PC-3 (cell line): ENCODE measurements at regions of chr10 and their contacts with region 1.

Region 1: DNA sequence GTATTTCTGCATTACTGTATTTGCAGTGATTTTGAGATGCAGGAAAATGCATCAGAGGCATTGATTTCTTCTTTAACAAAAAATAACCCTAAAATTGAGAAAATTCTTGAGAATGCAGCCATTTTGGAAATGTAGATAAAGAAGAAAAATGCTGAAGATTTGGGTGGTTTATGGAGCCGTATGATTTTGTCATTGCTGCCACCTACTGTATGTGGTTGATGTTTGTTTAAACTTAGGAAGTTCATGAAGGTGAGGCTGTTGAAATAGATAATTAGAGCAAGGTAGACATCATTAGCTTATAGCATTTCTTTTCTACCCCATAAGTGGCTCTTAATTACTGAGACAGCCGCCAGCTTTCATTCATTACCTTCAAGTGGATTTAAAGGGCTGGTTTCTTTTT is 92.1 kb upstream of the SAMD8 start:
- DNase-seq: peak; percentile 88
- ATAC-seq: peak; percentile 20; the same call in 1 of the 2 replicates
- H3K4me3 ChIP-seq: no peak overlapping the region
- H3K27ac ChIP-seq: no peak overlapping the region
- H3K4me1 ChIP-seq: peaks cover 14% of the 10 kb centered on the region
- H3K27me3 ChIP-seq: no peaks in the 10 kb centered on the region
- CTCF ChIP-seq: peak; percentile 98

Region 2: GRCh38 chr10:74244097-74244685 is 775.2 kb before region 1 on chr10:
- CTCF ChIA-PET with region 1: interaction called, 4 read pairs
- POLR2A ChIA-PET with region 1: interaction called, 3 read pairs
- intact Hi-C with region 1: loop called (anchors 1 kb)
- DNase-seq: peak; percentile 99
- ATAC-seq: peak; percentile 20; the same call in 1 of the 2 replicates
- H3K4me3 ChIP-seq: no peak overlapping the region
- H3K27ac ChIP-seq: no peak overlapping the region
- H3K4me1 ChIP-seq: no peaks in the 10 kb centered on the region
- H3K27me3 ChIP-seq: no peaks in the 10 kb centered on the region
- CTCF ChIP-seq: peak; percentile 100

Region 3: GRCh38 chr10:74432841-74433594 is 586.4 kb before region 1 on chr10:
- CTCF ChIA-PET with region 1: no interaction called
- POLR2A ChIA-PET with region 1: interaction called, 3 read pairs
- intact Hi-C with region 1: loop called (anchors 5 kb)
- DNase-seq: peak; percentile 70
- ATAC-seq: peak; percentile 82
- H3K4me3 ChIP-seq: no peak overlapping the region
- H3K27ac ChIP-seq: peak overlapping the region; percentile 46
- H3K4me1 ChIP-seq: peaks cover 29% of the 10 kb centered on the region
- H3K27me3 ChIP-seq: no peaks in the 10 kb centered on the region
- CTCF ChIP-seq: no peak

Region 4: DNA sequence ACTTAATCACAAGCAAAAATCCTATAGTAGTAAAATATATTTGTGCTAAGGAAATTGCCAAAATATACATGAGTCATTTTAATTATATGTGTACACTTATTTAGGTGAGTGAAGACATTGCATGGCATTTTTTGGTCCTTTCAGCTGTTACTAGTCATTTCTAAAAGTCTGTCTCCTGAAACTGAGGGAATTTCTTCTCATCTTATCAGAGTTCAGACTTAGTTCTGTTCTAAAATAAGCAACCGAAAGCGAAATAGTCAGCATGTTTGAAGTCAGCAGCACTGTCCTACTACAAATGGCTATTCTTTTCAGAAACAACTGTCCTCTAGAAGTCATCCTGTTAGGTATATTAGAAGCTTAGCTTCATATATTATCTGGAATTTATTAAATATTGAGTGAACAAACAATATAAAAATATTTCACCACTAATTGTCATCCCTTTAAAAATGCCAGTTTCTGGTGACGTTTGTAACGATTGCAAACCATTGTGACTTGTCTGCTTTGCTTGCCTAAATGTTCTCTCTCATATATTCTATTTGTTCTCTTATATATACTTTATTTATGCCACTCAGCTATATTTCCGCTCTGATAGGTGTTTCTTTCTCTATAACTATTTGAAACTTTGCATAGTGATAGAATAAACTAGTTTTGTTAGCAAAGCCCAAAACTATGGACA is 420.3 kb before region 1 on chr10:
- CTCF ChIA-PET with region 1: interaction called, 5 read pairs
- POLR2A ChIA-PET with region 1: no interaction called
- intact Hi-C with region 1: loop called (anchors 5 kb)
- DNase-seq: peak; percentile 74
- ATAC-seq: peak; percentile 89
- H3K4me3 ChIP-seq: no peak overlapping the region
- H3K27ac ChIP-seq: no peak overlapping the region
- H3K4me1 ChIP-seq: peaks cover 12% of the 10 kb centered on the region
- H3K27me3 ChIP-seq: no peaks in the 10 kb centered on the region
- CTCF ChIP-seq: no peak

Region 5: DNA sequence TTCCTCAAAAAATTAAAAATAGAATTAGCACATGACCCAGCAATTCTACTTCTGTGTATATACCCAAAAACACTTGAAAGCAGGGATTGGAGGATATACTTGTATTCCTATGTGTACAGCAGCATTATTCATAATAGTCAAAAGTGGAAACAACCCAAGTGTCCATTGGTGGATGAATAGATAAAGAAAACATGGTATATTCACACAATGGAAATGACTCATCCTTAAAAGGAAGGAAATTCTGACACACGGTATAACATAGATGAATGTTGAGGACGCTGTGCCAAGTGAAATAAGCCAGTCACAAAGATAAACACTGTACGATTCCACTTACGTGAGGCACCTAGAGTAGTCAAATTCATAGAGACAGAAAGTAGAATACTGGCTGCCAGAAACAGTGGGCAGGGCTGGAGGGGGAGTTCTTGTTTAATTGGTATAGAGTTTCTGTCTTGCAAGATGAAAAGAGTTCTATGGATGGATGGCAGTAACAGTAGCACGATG is 219.6 kb before region 1 on chr10:
- CTCF ChIA-PET with region 1: no interaction called
- POLR2A ChIA-PET with region 1: no interaction called
- intact Hi-C with region 1: loop called (anchors 1 kb)
- DNase-seq: peak; percentile 100
- ATAC-seq: peak; percentile 97
- H3K4me3 ChIP-seq: peak overlapping the region; percentile 3; the same call in 1 of the 2 replicates
- H3K27ac ChIP-seq: peak overlapping the region; percentile 67
- H3K4me1 ChIP-seq: peaks cover 8% of the 10 kb centered on the region
- H3K27me3 ChIP-seq: no peaks in the 10 kb centered on the region
- CTCF ChIP-seq: no peak

Region 6: DNA sequence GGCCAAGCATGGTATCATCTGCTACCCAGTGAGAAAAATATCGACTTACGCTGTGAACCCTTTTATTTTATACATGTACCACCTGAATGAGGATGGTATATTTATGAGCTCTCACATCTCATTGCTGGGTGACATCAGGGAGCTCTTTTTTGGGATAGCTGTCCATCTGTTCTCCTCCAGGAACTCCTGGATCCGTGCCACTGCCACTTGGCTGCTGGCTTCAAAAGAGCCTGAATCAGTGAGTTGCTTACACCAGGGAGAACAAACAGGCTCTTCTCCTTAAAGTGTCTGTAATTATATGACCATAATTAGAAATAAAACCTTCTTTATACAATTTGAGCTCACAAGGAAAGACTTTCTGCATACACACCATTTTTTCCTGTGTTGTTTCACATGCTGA is 86.7 kb before region 1 on chr10:
- CTCF ChIA-PET with region 1: no interaction called
- POLR2A ChIA-PET with region 1: no interaction called
- intact Hi-C with region 1: no loop called
- DNase-seq: peak; percentile 47
- ATAC-seq: no peak
- H3K4me3 ChIP-seq: no peak overlapping the region
- H3K27ac ChIP-seq: no peak overlapping the region
- H3K4me1 ChIP-seq: peaks cover 22% of the 10 kb centered on the region
- H3K27me3 ChIP-seq: no peaks in the 10 kb centered on the region
- CTCF ChIP-seq: no peak

Region 7: DNA sequence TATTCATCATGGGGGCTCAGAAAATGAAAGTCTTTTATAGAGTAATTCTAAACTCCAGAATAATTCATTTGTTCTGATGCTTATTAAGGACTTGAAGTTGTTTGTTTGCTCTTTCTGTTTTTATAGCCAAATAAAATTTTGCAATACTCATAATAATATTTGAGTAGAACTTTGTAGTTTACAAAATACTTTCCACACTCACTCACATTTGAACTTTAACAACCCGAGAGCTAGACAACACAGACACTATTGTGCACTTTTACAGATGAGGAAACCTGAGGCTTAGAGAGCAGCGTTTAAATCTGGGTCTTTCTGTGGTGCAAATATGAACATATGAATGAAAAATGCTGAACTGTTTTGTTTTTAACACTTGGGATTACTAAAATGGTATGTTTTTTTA is 66.2 kb before region 1 on chr10:
- CTCF ChIA-PET with region 1: no interaction called
- POLR2A ChIA-PET with region 1: no interaction called
- intact Hi-C with region 1: loop called (anchors 2 kb)
- DNase-seq: peak; percentile 89
- ATAC-seq: peak; percentile 70
- H3K4me3 ChIP-seq: peak overlapping the region; percentile 0; the same call in 1 of the 2 replicates
- H3K27ac ChIP-seq: peak overlapping the region; percentile 1; the same call in 1 of the 2 replicates
- H3K4me1 ChIP-seq: peaks cover 45% of the 10 kb centered on the region
- H3K27me3 ChIP-seq: no peaks in the 10 kb centered on the region
- CTCF ChIP-seq: no peak

Region 8: DNA sequence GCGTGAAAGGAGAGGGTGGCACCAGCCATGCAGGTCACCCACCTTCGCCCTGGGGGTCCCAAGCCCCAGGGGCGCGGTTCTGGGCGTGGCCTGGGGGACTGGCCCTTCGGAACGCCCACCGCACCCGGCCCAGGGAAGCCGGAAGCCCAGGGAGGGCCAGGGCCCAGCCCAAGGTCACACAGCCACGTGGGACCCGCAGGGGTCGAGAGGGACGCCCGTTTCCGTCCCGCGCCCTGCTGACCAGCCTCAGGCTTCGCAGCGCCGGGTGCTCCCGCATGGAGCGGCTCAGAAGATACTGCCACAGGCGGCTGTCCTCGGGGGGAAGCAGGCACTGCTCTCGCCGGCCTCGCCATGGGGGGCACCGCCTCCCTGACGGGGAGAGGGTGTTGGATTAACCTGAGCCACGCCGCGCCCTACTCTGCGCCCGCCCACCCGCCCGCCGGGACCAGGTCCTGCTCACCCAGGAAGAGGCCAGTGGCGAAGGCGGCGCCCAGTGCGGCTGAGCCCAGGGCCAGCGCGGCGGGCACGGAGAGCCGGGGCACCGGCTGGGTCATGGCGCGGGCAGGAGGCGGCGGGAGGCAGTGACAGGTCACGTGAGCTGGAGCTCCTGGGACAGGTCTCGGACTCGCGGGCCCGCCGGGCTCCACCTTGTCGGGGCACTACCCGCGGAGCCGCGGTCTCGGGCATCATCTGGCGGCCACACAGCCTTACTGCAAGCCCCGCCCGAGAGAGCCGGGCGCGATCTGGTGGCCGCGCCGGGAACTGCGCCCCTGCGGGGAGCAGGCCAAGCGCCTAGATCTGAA is 216.2 kb after region 1 on chr10 and contains the start of gene COMTD1:
- CTCF ChIA-PET with region 1: interaction called, 12 read pairs
- POLR2A ChIA-PET with region 1: interaction called, 4 read pairs
- intact Hi-C with region 1: loop called (anchors 5 kb)
- DNase-seq: peak; percentile 100
- ATAC-seq: peak; percentile 59
- H3K4me3 ChIP-seq: peak within 1 kb of the TSS; percentile 72
- H3K27ac ChIP-seq: peak within 1 kb of the TSS; percentile 71
- H3K4me1 ChIP-seq: peaks cover 42% of the 10 kb centered on the region
- H3K27me3 ChIP-seq: no peaks in the 10 kb centered on the region
- CTCF ChIP-seq: peak; percentile 100
- total RNA-seq, gene COMTD1: 183 and 214 TPM in 2 replicates

Region 9: DNA sequence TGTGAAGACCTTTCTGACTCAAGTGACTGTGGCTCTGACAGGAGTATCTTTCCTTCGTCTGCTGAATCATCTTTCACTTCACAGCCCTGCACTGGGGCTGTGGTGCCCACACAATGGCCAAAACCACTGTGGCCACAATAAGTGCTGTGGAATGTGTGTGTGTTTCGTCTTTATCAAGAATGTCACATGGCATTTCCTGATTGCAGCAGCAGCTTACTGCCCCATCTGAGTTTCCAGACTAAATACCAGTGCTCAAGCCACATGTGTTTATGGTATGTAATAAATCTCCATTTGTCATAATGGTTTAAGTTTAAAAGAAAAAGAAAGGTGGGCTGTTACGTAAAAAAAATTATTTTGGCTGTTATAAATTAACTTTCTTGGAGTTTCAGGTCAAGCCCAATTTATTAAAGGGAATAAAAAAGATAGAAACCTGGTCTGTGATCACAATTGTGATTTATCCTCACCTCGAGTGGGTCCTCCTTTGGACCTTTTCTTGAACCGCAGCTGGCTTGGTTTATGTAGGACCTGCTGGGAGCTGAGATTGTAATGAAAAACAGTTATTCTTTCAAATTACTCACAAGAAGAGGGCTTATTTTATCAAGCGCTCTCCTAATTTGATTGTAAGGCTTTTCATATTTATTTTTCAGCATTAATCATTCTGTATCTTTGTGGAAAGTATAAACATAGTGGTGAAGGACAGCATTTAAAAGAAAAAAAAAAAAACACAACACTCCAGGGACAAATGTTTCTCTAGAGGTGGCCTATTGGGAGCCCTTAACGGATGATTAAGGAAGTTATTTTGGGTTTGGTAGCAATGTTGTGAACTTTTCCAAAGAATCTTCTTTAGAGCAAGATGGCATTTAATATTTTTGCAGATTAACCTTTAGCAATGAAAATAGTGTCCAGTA is 528.3 kb after region 1 on chr10:
- CTCF ChIA-PET with region 1: no interaction called
- POLR2A ChIA-PET with region 1: no interaction called
- intact Hi-C with region 1: no loop called
- DNase-seq: peak; percentile 85
- ATAC-seq: peak; percentile 61
- H3K4me3 ChIP-seq: no peak overlapping the region
- H3K27ac ChIP-seq: no peak overlapping the region
- H3K4me1 ChIP-seq: peaks cover 10% of the 10 kb centered on the region; the same call in 1 of the 2 replicates
- H3K27me3 ChIP-seq: peaks cover 11% of the 10 kb centered on the region
- CTCF ChIP-seq: no peak